CD8-positive, alpha-beta T cell (primary cell): ENCODE measurements at regions of chr7 and their contacts with region 1.

Region 1: DNA sequence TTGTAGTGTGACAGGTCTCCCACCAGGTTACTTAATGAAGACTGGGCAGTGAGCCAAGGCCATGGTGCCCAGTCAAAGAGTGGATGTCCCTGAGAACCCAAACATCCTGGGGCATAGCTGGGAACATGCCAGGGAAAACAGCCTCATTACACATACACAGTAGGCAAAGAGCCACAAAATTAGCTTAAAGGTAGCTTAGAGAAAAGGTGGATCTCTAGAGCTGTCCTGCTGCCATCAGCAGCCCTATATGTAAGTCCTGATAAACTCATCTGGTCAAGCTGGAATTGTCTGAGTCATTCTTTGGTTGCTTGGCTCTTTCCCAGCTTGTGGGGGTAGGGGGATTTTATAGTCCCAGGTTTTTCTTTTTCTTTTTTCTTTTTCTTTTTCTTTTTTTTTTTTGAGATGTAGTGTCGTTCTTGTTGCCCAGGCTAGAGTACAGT is 287.9 kb downstream of the PHF14 start:
- DNase-seq: no peak
- ATAC-seq: no peak
- H3K4me3 ChIP-seq: no peak overlapping the region
- H3K4me3 Mint-ChIP-seq: no peak overlapping the region
- H3K27ac ChIP-seq: no peak overlapping the region
- H3K27ac Mint-ChIP-seq: no peak overlapping the region
- H3K4me1 ChIP-seq: no peaks in the 10 kb centered on the region
- H3K4me1 Mint-ChIP-seq: no peaks in the 10 kb centered on the region
- H3K27me3 ChIP-seq: no peaks in the 10 kb centered on the region
- H3K27me3 Mint-ChIP-seq: peaks cover under 1% of the 10 kb centered on the region
- CTCF ChIP-seq: no peak

Region 2: DNA sequence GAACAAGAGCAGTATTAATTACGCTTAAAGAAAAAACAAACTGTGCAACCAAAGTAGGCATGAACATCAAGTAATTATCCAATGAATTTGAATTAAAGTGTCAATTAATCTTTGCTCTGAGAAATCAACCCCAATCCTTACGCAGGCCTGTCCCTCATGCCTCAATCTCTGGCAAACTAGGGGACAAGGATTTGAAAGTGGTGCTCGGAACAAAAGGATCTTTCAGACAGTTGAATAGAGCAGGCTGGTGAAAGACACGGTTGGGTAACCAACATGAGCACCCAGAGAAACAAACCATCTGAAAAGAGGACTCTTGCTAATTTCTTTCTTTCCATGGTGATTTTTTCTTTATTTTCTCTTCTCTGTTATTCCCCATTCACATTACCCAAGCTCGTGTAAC is 491.4 kb before region 1 on chr7:
- CTCF ChIA-PET with region 1: no interaction called
- POLR2A ChIA-PET with region 1: no interaction called
- intact Hi-C with region 1: loop called in 1 of 2 experiments (anchors 5 kb)
- DNase-seq: no peak
- ATAC-seq: no peak
- H3K4me3 ChIP-seq: no peak overlapping the region
- H3K4me3 Mint-ChIP-seq: no peak overlapping the region
- H3K27ac ChIP-seq: no peak overlapping the region
- H3K27ac Mint-ChIP-seq: no peak overlapping the region
- H3K4me1 ChIP-seq: no peaks in the 10 kb centered on the region
- H3K4me1 Mint-ChIP-seq: no peaks in the 10 kb centered on the region
- H3K27me3 ChIP-seq: no peaks in the 10 kb centered on the region
- H3K27me3 Mint-ChIP-seq: no peaks in the 10 kb centered on the region
- CTCF ChIP-seq: no peak

Region 3: DNA sequence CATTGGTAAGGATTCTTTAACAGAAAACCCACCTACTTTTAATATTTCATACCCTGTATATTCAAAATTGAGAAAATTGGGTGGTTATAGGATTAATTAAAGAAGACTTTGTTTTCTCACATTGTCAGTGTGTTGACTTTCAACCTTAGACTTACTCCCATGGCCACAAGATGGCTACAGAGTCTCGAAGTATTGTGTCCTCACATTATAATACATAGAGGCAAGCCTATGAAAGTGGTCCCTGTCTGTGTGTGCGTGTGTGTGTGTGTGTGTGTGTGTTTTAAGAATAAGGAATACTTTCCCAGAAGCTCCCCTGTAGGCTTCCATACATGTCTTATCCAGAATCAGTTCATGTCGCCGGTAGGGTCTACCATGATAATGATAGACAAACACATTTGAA is 107.8 kb before region 1 on chr7:
- CTCF ChIA-PET with region 1: no interaction called
- POLR2A ChIA-PET with region 1: no interaction called
- intact Hi-C with region 1: no loop called
- DNase-seq: no peak
- ATAC-seq: no peak
- H3K4me3 ChIP-seq: no peak overlapping the region
- H3K4me3 Mint-ChIP-seq: no peak overlapping the region
- H3K27ac ChIP-seq: no peak overlapping the region
- H3K27ac Mint-ChIP-seq: no peak overlapping the region
- H3K4me1 ChIP-seq: no peaks in the 10 kb centered on the region
- H3K4me1 Mint-ChIP-seq: no peaks in the 10 kb centered on the region
- H3K27me3 ChIP-seq: no peaks in the 10 kb centered on the region
- H3K27me3 Mint-ChIP-seq: no peaks in the 10 kb centered on the region
- CTCF ChIP-seq: no peak

Region 4: DNA sequence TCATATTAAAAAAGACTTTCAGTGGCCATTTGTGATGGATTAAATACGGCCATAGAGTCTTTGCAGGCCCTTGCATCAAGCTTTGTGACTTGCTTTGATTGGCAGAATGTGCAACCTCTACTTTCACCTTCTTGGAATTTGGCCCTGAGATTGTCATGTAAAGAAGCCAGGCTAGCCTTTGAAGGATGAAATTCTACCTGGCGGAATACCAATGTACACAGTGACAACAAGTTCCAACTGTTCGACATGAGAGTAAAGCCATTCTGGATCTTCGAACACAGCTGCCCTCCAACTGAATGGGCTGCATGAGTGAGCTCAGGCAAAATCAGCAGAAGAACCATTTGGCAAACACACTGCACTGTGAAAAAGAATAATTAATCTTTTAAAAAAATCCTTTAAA is 33.4 kb after region 1 on chr7:
- CTCF ChIA-PET with region 1: no interaction called
- POLR2A ChIA-PET with region 1: no interaction called
- intact Hi-C with region 1: no loop called
- DNase-seq: no peak
- ATAC-seq: no peak
- H3K4me3 ChIP-seq: no peak overlapping the region
- H3K4me3 Mint-ChIP-seq: no peak overlapping the region
- H3K27ac ChIP-seq: no peak overlapping the region
- H3K27ac Mint-ChIP-seq: no peak overlapping the region
- H3K4me1 ChIP-seq: no peaks in the 10 kb centered on the region
- H3K4me1 Mint-ChIP-seq: no peaks in the 10 kb centered on the region
- H3K27me3 ChIP-seq: no peaks in the 10 kb centered on the region
- H3K27me3 Mint-ChIP-seq: no peaks in the 10 kb centered on the region
- CTCF ChIP-seq: no peak

Region 5: GRCh38 chr7:11410656-11411644 is 149.4 kb after region 1 on chr7:
- CTCF ChIA-PET with region 1: no interaction called
- POLR2A ChIA-PET with region 1: no interaction called
- intact Hi-C with region 1: no loop called
- DNase-seq: no peak
- ATAC-seq: no peak
- H3K4me3 ChIP-seq: no peak overlapping the region
- H3K4me3 Mint-ChIP-seq: no peak overlapping the region
- H3K27ac ChIP-seq: no peak overlapping the region
- H3K27ac Mint-ChIP-seq: no peak overlapping the region
- H3K4me1 ChIP-seq: no peaks in the 10 kb centered on the region
- H3K4me1 Mint-ChIP-seq: no peaks in the 10 kb centered on the region
- H3K27me3 ChIP-seq: no peaks in the 10 kb centered on the region
- H3K27me3 Mint-ChIP-seq: no peaks in the 10 kb centered on the region
- CTCF ChIP-seq: no peak